Thyroid gland (tissue), 4 donors: ENCODE measurements at regions of chr11 and their contacts with region 1.

Region 1: DNA sequence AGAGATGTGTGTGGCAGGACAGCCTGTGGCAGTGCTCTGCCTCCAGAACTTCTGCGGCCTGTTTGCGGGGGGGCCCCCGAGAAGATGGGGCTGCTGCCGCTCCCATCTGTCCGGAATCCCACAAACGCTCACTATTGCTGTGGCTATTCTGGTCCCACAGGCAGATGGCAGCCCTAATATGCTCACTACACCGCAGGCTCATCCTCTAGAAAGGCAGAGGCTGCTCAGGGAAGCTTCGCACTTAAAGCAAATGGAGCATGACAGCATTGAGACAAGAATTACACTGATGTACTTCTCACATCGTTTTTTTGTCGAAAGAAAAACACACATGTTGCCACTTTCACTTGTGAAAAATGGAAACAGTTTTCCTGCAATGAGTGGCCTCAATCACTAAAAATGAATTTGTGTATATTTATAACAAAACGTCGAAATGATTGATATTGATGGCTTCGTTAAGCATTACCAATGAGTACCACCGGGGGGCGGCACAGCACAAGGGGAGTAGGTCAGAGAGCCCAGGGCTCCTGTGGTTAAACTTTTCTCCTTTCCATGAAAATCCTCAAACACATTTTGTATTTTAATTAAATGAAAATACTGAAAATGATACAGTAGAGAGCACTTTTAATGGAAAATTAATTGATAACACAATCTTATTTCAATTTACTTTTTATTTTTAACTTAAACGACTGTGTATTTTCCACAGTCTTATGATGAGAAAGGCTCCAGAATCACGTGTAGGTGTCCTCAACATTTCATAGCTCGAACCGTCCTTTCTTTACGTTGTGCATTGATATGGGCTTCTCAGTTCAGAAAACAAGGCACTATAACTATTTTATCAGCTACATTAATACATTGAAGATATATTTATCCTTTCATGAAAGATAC is 69.1 kb downstream of the CTTN start:
- DNase-seq: peak; percentile 51 to 71
- H3K4me3 ChIP-seq: no peak overlapping the region
- H3K27ac ChIP-seq: no peak overlapping the region
- H3K4me1 ChIP-seq: peaks cover 3 to 4% of the 10 kb centered on the region in 2 donors
- H3K27me3 ChIP-seq: no peaks in the 10 kb centered on the region
- CTCF ChIP-seq: peak; percentile 68 to 93 (median 81)
- POLR2A ChIP-seq: no peak

Region 2: GRCh38 chr11:70503458-70504221 is 36.2 kb after region 1 on chr11:
- intact Hi-C with region 1: no loop called
- DNase-seq: no peak
- H3K4me3 ChIP-seq: no peak overlapping the region
- H3K27ac ChIP-seq: no peak overlapping the region
- H3K4me1 ChIP-seq: no peaks in the 10 kb centered on the region
- H3K27me3 ChIP-seq: no peaks in the 10 kb centered on the region
- CTCF ChIP-seq: no peak
- POLR2A ChIP-seq: no peak

Region 3: DNA sequence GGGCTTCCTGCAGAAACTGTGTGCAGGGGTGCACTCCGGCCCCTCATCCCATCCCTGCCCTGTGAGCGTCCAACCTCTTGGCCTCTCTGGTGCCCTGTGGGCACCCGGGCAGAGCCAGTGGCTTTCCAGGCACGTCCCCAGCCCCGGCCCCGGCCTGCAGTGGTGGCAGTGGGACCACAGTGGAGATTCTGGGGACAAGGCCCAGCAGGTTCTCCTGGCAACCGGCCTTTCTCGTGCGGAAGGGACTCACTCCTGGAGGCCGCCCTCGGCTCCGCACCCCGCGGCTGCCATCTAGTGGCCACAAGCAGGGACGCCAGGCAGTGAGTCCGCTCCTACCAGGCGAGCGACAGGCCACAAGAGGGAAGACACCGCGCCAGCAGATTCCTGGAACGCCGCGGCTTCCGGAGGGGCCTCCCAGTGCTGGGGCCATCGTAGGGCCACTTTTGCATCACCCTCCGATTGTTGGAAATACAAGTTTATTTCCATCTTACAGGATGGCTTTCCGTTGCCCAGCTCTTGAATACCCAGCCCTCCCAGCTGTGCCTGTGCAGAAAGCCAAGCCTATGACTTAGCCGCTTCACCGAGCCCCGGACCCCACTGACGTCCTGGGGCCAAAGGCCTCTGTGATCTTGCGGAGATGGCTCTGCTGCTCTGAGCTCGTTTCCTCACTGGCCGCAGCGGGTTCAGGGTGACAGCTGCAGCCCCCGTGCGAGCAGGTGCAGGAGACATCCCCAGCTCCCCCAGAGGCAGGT is 288.1 kb after region 1 on chr11:
- intact Hi-C with region 1: loop called (anchors 5 kb)
- DNase-seq: peak; percentile 75 to 84
- H3K4me3 ChIP-seq: no peak overlapping the region
- H3K27ac ChIP-seq: no peak overlapping the region
- H3K4me1 ChIP-seq: peaks cover 0 to 6% of the 10 kb centered on the region in 2 donors
- H3K27me3 ChIP-seq: no peaks in the 10 kb centered on the region
- CTCF ChIP-seq: peak; percentile 84 to 98 (median 97)
- POLR2A ChIP-seq: no peak

Region 4: GRCh38 chr11:70894566-70895365 is 427.3 kb after region 1 on chr11:
- intact Hi-C with region 1: loop called (anchors 10 kb)
- DNase-seq: no peak
- H3K4me3 ChIP-seq: no peak overlapping the region
- H3K27ac ChIP-seq: no peak overlapping the region
- H3K4me1 ChIP-seq: no peaks in the 10 kb centered on the region
- H3K27me3 ChIP-seq: no peaks in the 10 kb centered on the region
- CTCF ChIP-seq: no peak
- POLR2A ChIP-seq: no peak